ENCODE measurements at regions of chr1 and their contacts with region 1.

Region 1: DNA sequence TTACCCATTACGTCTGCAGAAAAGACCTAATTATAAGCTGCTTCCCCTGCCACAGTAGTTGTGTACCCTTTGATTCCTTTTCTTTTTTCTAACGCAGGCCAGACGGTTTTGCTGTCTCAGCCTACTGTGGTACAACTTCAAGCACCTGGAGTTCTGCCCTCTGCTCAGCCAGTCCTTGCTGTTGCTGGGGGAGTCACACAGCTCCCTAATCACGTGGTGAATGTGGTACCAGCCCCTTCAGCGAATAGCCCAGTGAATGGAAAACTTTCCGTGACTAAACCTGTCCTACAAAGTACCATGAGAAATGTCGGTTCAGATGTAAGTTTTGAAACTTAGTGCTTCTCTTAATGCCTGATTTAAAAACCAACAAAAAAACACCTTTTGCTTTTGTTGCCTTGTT is 35.8 kb downstream of the ATF6 start:
- DNase-seq: peak in 1 of 2 donors; percentile 43
- H3K4me3 ChIP-seq: no peak overlapping the region
- H3K27ac ChIP-seq: peak overlapping the region; percentile 27 to 57
- H3K4me1 ChIP-seq: peaks cover 0 to 10% of the 10 kb centered on the region in 2 donors
- H3K27me3 ChIP-seq: no peaks in the 10 kb centered on the region
- CTCF ChIP-seq: no peak
- POLR2A ChIP-seq: no peak

Region 2: DNA sequence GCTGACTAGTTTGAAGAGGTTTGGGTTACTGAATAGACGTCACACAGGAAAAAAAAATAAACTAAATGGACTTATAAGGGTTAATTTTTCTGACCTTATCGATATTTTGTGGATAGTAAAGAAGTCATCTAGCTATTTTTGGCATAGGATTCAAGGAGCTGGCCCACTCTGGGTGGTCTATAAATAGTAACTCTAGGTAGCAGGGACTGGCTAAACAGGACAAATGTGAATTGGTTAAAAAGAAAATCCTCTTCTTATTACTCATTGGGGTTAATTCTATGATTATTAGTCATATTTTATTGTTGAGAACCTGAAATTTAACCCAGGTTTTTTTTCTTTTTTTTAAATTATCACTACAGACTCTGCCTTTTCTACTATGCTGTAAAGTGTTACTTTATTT is 25.8 kb after region 1 on chr1:
- intact Hi-C with region 1: no loop called
- DNase-seq: no peak
- H3K4me3 ChIP-seq: no peak overlapping the region
- H3K27ac ChIP-seq: no peak overlapping the region
- H3K4me1 ChIP-seq: no peaks in the 10 kb centered on the region
- H3K27me3 ChIP-seq: no peaks in the 10 kb centered on the region
- CTCF ChIP-seq: no peak
- POLR2A ChIP-seq: no peak

Region 3: DNA sequence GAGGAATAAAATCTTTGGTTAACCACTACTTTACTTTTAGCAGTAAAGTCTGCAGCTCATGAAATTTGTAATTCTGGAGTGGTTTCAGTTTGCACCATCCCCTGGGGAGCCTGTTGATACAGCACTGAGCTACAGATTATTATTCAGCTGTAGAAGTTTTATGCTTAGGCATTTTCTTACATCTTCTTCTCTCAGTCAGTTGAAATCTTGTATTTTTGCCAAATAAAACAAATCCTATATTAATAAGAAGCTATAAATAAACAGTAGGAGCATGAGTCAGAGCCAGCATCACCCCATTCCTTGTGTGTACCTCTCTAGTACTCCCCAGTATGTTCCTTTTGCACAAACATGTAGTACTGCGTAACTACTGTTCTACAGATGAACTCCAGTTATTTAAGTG is 83.0 kb after region 1 on chr1:
- intact Hi-C with region 1: no loop called
- DNase-seq: no peak
- H3K4me3 ChIP-seq: peak overlapping the region in 1 of 3 donors; percentile 20
- H3K27ac ChIP-seq: peak overlapping the region in 1 of 2 donors; percentile 8
- H3K4me1 ChIP-seq: no peaks in the 10 kb centered on the region
- H3K27me3 ChIP-seq: no peaks in the 10 kb centered on the region
- CTCF ChIP-seq: no peak
- POLR2A ChIP-seq: no peak

Region 4: GRCh38 chr1:162151900-162152829 is 350.2 kb after region 1 on chr1:
- intact Hi-C with region 1: no loop called
- DNase-seq: peak in 1 of 2 donors; percentile 49
- H3K4me3 ChIP-seq: no peak overlapping the region
- H3K27ac ChIP-seq: peak overlapping the region; percentile 76 to 78
- H3K4me1 ChIP-seq: peaks cover 0 to 10% of the 10 kb centered on the region in 2 donors
- H3K27me3 ChIP-seq: no peaks in the 10 kb centered on the region
- CTCF ChIP-seq: no peak
- POLR2A ChIP-seq: no peak

Region 5: GRCh38 chr1:162564762-162565218 is 762.8 kb after region 1 on chr1:
- intact Hi-C with region 1: loop called (anchors 5 kb)
- DNase-seq: no peak
- H3K4me3 ChIP-seq: peak overlapping the region in 2 of 3 donors; percentile 12 to 97
- H3K27ac ChIP-seq: no peak overlapping the region
- H3K4me1 ChIP-seq: peaks cover 0 to 26% of the 10 kb centered on the region in 2 donors
- H3K27me3 ChIP-seq: no peaks in the 10 kb centered on the region
- CTCF ChIP-seq: no peak
- POLR2A ChIP-seq: no peak

Measured in breast epithelium (tissue), 4 donors.